CD8-positive, alpha-beta T cell (primary cell): ENCODE measurements at regions of chr18 and their contacts with region 1.

Region 1: GRCh38 chr18:48445540-48445939 is 36.4 kb upstream of the ZBTB7C start:
- DNase-seq: peak; percentile 31 to 76 (median 64)
- ATAC-seq: peak; percentile 73
- H3K4me3 ChIP-seq: no peak overlapping the region
- H3K4me3 Mint-ChIP-seq: no peak overlapping the region
- H3K27ac ChIP-seq: no peak overlapping the region
- H3K27ac Mint-ChIP-seq: no peak overlapping the region
- H3K4me1 ChIP-seq: no peaks in the 10 kb centered on the region
- H3K4me1 Mint-ChIP-seq: peaks cover 9% of the 10 kb centered on the region
- H3K27me3 ChIP-seq: no peaks in the 10 kb centered on the region
- H3K27me3 Mint-ChIP-seq: peaks cover 27% of the 10 kb centered on the region
- CTCF ChIP-seq: peak; percentile 74

Region 2: DNA sequence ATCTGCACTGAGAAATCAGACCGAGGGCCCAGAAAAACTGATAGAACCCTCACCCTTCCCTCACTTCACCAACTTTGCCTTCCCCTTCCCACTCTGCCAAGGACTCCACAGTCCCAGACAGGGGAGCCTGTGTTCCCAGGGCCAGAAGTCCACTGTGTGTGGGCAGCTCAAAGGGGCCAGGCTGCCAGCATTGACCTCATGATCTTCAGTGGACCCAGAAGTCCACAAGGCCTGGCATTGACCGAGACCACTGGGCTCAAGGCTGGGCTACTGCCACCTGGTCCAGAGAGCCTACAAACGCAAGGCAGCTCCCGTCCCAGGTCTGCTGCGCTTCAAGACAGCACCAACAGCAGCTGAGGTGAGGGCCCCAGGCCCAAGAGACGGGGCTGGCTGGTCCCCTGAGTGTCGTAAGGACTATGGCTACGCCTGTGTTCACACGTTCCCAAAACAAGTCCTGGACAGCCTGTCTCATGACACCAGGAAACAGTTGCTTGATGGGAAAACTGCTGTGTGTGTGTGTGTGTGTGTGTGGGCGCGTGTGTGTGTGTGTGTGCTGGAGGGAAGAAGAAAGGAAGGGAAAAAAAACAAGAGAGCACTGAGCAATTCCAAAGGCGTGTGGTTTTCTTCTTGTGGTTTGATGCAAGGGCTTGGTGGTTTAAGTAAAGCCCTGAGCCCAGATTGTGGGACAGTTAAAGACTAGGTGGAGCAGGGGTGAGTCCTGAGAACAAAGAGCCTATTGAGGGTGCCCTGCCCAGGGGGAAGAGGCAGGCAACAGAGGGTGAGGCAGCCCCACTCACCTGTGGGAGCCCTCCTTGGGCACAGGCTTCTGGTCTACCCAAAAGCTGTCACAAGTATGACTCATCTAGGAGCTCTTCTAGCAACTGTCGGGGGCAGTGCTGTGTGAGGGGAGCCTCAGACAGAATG is 10.3 kb after region 1 on chr18:
- CTCF ChIA-PET with region 1: interaction called, 73 read pairs
- POLR2A ChIA-PET with region 1: no interaction called
- intact Hi-C with region 1: no loop called
- DNase-seq: peak in 8 of 9 experiments; percentile 30 to 72 (median 60)
- ATAC-seq: peak; percentile 94
- H3K4me3 ChIP-seq: no peak overlapping the region
- H3K4me3 Mint-ChIP-seq: no peak overlapping the region
- H3K27ac ChIP-seq: no peak overlapping the region
- H3K27ac Mint-ChIP-seq: no peak overlapping the region
- H3K4me1 ChIP-seq: peaks cover 29% of the 10 kb centered on the region
- H3K4me1 Mint-ChIP-seq: peaks cover 28% of the 10 kb centered on the region
- H3K27me3 ChIP-seq: peaks cover 0 to 2% of the 10 kb centered on the region in 2 experiments
- H3K27me3 Mint-ChIP-seq: peaks cover 37% of the 10 kb centered on the region
- CTCF ChIP-seq: no peak

Region 3: DNA sequence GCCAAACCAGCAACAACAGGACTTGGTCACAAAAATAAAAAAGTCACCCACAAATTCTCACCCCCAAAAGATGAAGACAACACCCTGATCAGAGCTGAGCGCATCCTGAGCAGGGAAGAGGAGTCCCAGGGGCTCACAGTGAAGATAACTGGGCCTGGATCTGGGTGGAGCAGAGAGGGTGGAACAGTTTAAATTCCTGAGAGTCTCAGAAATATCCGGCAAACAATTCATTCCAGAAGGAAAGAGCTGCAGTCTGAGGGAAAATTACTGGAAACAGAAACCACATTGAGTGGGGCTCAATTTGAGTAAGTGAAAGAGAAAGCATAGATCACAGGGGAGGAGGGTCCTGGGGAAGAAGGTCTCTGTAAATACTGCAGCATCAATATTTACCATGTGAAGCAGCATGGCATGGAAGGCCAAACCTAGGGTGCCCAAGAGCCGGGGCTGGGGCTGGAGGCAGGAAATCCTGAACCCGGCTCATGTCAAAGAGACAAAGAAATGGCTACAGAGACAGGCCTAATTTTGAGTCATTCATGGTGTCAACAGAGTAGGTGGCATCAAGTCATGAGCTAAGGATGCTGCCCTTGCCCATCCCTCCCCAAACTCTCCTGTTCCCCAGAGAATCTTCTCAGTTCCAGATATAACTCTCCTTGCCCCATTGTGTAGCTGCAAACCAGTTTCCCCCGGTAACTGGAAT is 25.1 kb after region 1 on chr18:
- CTCF ChIA-PET with region 1: interaction called, 13 read pairs
- POLR2A ChIA-PET with region 1: no interaction called
- intact Hi-C with region 1: loop called in 1 of 2 experiments (anchors 1 kb)
- DNase-seq: no peak
- ATAC-seq: no peak
- H3K4me3 ChIP-seq: no peak overlapping the region
- H3K4me3 Mint-ChIP-seq: no peak overlapping the region
- H3K27ac ChIP-seq: no peak overlapping the region
- H3K27ac Mint-ChIP-seq: no peak overlapping the region
- H3K4me1 ChIP-seq: no peaks in the 10 kb centered on the region
- H3K4me1 Mint-ChIP-seq: no peaks in the 10 kb centered on the region
- H3K27me3 ChIP-seq: peaks cover 0 to 3% of the 10 kb centered on the region in 2 experiments
- H3K27me3 Mint-ChIP-seq: peaks cover 33% of the 10 kb centered on the region
- CTCF ChIP-seq: no peak

Region 4: DNA sequence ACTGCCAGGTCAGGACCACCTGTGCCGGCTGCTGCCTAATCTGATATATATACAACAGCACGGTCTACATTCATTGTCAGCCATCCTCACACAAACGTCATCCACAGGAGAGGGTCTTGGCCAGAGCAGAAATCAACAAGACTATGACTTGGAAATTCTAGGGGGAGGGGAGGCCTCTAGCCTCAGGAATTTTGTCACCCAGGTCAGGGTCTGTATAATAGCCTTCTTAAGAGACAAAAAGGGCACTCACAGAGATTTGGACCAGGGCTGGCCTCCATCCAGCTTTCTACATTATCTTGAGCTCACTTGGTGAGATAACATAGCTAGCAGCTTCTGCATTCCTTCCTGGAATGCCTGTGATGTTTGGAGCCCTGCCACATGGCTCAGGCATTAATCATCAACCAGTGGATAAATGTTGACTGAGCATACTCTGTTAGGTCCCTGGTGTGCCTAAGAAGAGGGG is 42.9 kb after region 1 on chr18:
- CTCF ChIA-PET with region 1: no interaction called
- POLR2A ChIA-PET with region 1: no interaction called
- intact Hi-C with region 1: no loop called
- DNase-seq: no peak
- ATAC-seq: no peak
- H3K4me3 ChIP-seq: no peak overlapping the region
- H3K4me3 Mint-ChIP-seq: no peak overlapping the region
- H3K27ac ChIP-seq: no peak overlapping the region
- H3K27ac Mint-ChIP-seq: no peak overlapping the region
- H3K4me1 ChIP-seq: no peaks in the 10 kb centered on the region
- H3K4me1 Mint-ChIP-seq: no peaks in the 10 kb centered on the region
- H3K27me3 ChIP-seq: peaks cover 0 to 7% of the 10 kb centered on the region in 2 experiments
- H3K27me3 Mint-ChIP-seq: peaks cover 42% of the 10 kb centered on the region
- CTCF ChIP-seq: no peak

Region 5: DNA sequence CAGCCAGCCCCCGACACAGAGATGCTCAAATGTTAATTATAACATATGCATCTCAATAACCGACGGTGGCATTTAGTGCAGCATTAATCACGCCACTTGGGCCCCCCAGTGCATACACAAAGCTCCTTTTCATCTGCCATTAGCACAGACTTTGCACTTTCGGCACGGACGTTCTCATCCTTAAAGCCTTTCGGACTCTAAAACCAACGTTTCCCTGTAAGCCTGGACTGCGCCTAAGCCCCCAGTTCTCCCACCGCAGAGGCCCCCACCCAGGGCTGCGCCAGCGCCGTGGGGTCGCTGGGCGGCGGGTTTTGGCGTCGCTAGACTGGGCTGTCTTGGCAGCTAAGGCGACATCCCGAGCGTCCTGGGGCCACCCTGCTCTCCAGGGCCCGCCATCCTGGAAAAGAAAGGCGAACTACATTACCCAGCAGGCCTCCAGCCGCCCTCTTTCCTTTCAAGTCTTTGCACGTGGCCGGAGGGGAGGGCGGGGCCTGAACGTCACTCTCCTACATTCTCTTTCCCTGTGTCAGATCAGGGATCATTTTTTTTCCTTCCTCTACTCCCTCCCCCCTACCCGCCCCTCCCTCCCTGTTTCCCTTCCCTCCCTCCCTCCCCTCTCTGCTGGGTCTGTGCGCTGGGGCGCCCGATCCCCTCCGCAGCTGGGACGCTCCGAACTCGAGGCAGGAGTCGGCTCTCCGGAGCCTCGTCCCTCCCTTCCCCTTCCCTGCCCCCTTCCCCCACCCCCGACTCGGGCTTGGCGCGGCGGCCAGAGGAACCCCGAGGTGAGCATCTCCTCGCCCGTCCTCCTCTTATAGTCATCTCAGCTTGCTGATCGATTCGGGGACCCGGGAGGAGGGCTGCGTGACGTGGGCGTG is 93.2 kb after region 1 on chr18 and contains the start of gene CTIF:
- CTCF ChIA-PET with region 1: no interaction called
- POLR2A ChIA-PET with region 1: no interaction called
- intact Hi-C with region 1: no loop called
- DNase-seq: peak in 8 of 9 experiments; percentile 30 to 72 (median 57)
- ATAC-seq: peak; percentile 66
- H3K4me3 ChIP-seq: peak within 1 kb of the TSS; percentile 63 to 77
- H3K4me3 Mint-ChIP-seq: peak within 1 kb of the TSS; percentile 86
- H3K27ac ChIP-seq: no peak within 1 kb of the TSS
- H3K27ac Mint-ChIP-seq: no peak within 1 kb of the TSS
- H3K4me1 ChIP-seq: peaks cover 6% of the 10 kb centered on the region
- H3K4me1 Mint-ChIP-seq: peaks cover 10% of the 10 kb centered on the region
- H3K27me3 ChIP-seq: peaks cover 0 to 12% of the 10 kb centered on the region in 2 experiments
- H3K27me3 Mint-ChIP-seq: peaks cover 20% of the 10 kb centered on the region
- CTCF ChIP-seq: no peak
- total RNA-seq, gene CTIF: 2.0 to 3.0 TPM